CD4-positive, alpha-beta memory T cell (primary cell): ENCODE measurements at regions of chr13 and their contacts with region 1.

Region 1: DNA sequence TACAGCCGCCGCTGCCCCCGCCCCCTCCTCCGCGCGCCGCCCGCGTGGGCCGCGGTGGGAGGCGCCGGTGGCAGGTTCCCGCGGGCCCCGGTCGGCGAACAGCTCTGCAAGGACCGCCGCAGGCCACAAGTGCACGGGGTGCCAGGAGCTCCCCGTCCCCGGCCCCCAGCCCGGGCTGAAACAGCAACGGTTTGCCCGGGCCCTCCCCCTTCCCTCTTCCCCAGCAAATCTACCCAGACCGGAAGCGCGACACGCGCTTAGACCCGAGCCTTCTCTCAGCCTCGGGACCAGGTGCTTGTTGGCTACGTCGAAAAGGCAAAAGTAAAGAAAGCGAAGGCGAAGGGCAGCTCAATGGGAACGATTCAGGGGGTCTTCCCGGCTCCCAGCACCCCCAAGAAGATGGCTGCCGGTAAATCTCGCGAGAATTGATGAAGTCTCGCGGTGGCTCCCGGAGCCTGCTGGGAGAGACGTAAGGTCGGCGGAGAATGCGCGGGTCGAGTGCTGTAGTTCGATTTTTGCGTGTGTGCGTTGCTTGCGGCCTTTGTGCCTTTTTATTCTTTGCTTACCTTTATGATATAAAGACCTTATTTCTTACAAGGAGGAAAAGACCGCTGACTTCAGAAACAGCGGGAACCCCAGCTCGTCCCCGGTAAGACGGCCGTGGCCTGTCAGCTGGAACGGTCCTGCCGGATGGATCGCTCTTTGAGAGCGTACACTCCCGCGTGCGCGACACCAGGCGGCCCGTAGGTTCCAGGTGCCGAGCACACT is at the start of gene RBM26:
- DNase-seq: peak; percentile 93 to 95 (median 94)
- H3K4me3 ChIP-seq: peak within 1 kb of the TSS; percentile 57 to 72
- H3K4me3 Mint-ChIP-seq: peak within 1 kb of the TSS in 7 of 8 donors; percentile 95 to 96 (median 95)
- H3K27ac ChIP-seq: peak within 1 kb of the TSS; percentile 97
- H3K27ac Mint-ChIP-seq: peak within 1 kb of the TSS in 6 of 7 donors; percentile 97 to 99 (median 98)
- H3K4me1 ChIP-seq: peaks cover 53% of the 10 kb centered on the region
- H3K4me1 Mint-ChIP-seq: peaks cover 16 to 38% (median 28%) of the 10 kb centered on the region in 4 donors
- H3K27me3 ChIP-seq: no peaks in the 10 kb centered on the region
- H3K27me3 Mint-ChIP-seq: no peaks in the 10 kb centered on the region
- total RNA-seq, gene RBM26: 94.1 to 96.3 TPM

Region 2: GRCh38 chr13:79385694-79386093 is 20.3 kb before region 1 on chr13:
- CTCF ChIA-PET with region 1: interaction called, 72 read pairs
- POLR2A ChIA-PET with region 1: interaction called, 11 read pairs
- intact Hi-C with region 1: no loop called
- DNase-seq: peak in 1 of 5 donors; percentile 42
- H3K4me3 ChIP-seq: no peak overlapping the region
- H3K4me3 Mint-ChIP-seq: peak overlapping the region in 1 of 8 donors; percentile 14
- H3K27ac ChIP-seq: no peak overlapping the region
- H3K27ac Mint-ChIP-seq: peak overlapping the region in 2 of 7 donors; percentile 52 to 66
- H3K4me1 ChIP-seq: peaks cover 82% of the 10 kb centered on the region
- H3K4me1 Mint-ChIP-seq: peaks cover 47 to 77% (median 63%) of the 10 kb centered on the region in 4 donors
- H3K27me3 ChIP-seq: no peaks in the 10 kb centered on the region
- H3K27me3 Mint-ChIP-seq: no peaks in the 10 kb centered on the region

Region 3: GRCh38 chr13:79451500-79451962 is 45.5 kb after region 1 on chr13:
- CTCF ChIA-PET with region 1: no interaction called
- POLR2A ChIA-PET with region 1: interaction called, 6 read pairs
- intact Hi-C with region 1: loop called (anchors 5 kb)
- DNase-seq: peak; percentile 73 to 96 (median 77)
- H3K4me3 ChIP-seq: peak overlapping the region in 1 of 2 donors; percentile 3
- H3K4me3 Mint-ChIP-seq: peak overlapping the region; percentile 17 to 77 (median 76)
- H3K27ac ChIP-seq: peak overlapping the region; percentile 42
- H3K27ac Mint-ChIP-seq: peak overlapping the region; percentile 83 to 98 (median 94)
- H3K4me1 ChIP-seq: peaks cover 45% of the 10 kb centered on the region
- H3K4me1 Mint-ChIP-seq: peaks cover 28 to 66% (median 39%) of the 10 kb centered on the region in 4 donors
- H3K27me3 ChIP-seq: no peaks in the 10 kb centered on the region
- H3K27me3 Mint-ChIP-seq: no peaks in the 10 kb centered on the region

Region 4: GRCh38 chr13:79541426-79542049 is 135.5 kb after region 1 on chr13:
- CTCF ChIA-PET with region 1: interaction called, 4 read pairs
- POLR2A ChIA-PET with region 1: no interaction called
- intact Hi-C with region 1: loop called (anchors 5 kb)
- DNase-seq: peak in 4 of 5 donors; percentile 59 to 66 (median 62)
- H3K4me3 ChIP-seq: no peak overlapping the region
- H3K4me3 Mint-ChIP-seq: no peak overlapping the region
- H3K27ac ChIP-seq: no peak overlapping the region
- H3K27ac Mint-ChIP-seq: no peak overlapping the region
- H3K4me1 ChIP-seq: no peaks in the 10 kb centered on the region
- H3K4me1 Mint-ChIP-seq: peaks cover 0 to 2% (median 0%) of the 10 kb centered on the region in 4 donors
- H3K27me3 ChIP-seq: no peaks in the 10 kb centered on the region
- H3K27me3 Mint-ChIP-seq: no peaks in the 10 kb centered on the region

Region 5: GRCh38 chr13:79775830-79776229 is 369.8 kb after region 1 on chr13:
- CTCF ChIA-PET with region 1: no interaction called
- POLR2A ChIA-PET with region 1: no interaction called
- intact Hi-C with region 1: no loop called
- DNase-seq: no peak
- H3K4me3 ChIP-seq: no peak overlapping the region
- H3K4me3 Mint-ChIP-seq: no peak overlapping the region
- H3K27ac ChIP-seq: no peak overlapping the region
- H3K27ac Mint-ChIP-seq: no peak overlapping the region
- H3K4me1 ChIP-seq: no peaks in the 10 kb centered on the region
- H3K4me1 Mint-ChIP-seq: no peaks in the 10 kb centered on the region
- H3K27me3 ChIP-seq: no peaks in the 10 kb centered on the region
- H3K27me3 Mint-ChIP-seq: no peaks in the 10 kb centered on the region